Head of caudate nucleus (tissue), 42 donors: ENCODE measurements at regions of chr16 and their contacts with region 1.

Region 1: GRCh38 chr16:84252184-84252583 is 12.4 kb upstream of the KCNG4 start:
- DNase-seq: no peak

Region 2: GRCh38 chr16:84459941-84460405 is 207.8 kb after region 1 on chr16:
- intact Hi-C with region 1: loop called (anchors 10 kb)
- DNase-seq: peak in 10 of 42 donors; percentile 8 to 36 (median 16)